ENCODE measurements at regions of chr4 and their contacts with region 1.

Region 1: GRCh38 chr4:158729716-158730559 is 6.7 kb upstream of the PPID start:
- DNase-seq: no peak
- H3K4me3 ChIP-seq: no peak overlapping the region
- H3K27ac ChIP-seq: no peak overlapping the region
- H3K4me1 ChIP-seq: no peaks in the 10 kb centered on the region
- H3K27me3 ChIP-seq: peaks cover 0 to 42% (median 0%) of the 10 kb centered on the region in 7 donors
- CTCF ChIP-seq: peak in 10 of 11 experiments; percentile 24 to 80 (median 56)
- POLR2A ChIP-seq: no peak

Region 2: GRCh38 chr4:158006990-158007389 is 722.9 kb before region 1 on chr4:
- intact Hi-C with region 1: no loop called
- DNase-seq: no peak
- H3K4me3 ChIP-seq: no peak overlapping the region
- H3K27ac ChIP-seq: peak overlapping the region in 6 of 8 donors; percentile 53 to 73 (median 66)
- H3K4me1 ChIP-seq: peaks cover 0 to 28% (median 5%) of the 10 kb centered on the region in 6 donors
- H3K27me3 ChIP-seq: no peaks in the 10 kb centered on the region
- CTCF ChIP-seq: no peak
- POLR2A ChIP-seq: no peak

Region 3: DNA sequence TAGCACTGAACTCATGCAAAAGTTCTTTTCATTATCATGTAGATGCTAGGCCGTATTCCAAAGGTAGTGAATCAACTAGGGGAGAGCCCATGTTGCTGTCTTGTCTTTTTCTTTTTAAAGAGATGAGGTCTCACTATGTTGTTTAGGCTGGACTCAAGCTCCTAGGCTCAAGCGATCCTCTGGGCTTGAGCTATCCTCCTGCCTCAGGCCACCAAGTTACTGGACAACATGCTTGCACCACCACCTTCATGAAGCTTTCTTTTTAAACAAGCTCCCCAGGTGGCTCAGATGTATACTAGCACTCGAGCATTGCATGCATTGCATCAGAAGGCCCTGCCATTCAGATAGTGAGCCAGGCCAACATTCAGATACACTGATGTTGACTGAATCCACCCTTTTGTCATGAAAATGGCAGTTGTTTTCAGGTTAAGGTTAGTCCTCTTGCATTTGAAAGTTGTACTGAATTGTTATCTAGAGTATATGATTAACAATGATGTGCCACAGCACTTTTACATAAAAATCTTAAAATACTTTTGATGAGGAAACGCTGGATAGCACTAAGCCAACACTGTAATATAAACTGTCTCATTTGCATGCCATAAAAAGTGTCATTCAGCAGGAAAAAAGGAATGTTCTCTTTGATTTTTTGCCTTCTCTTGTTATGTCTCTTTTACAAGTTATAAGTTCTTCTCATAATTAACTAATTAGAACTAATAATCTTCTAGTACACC is 115.5 kb after region 1 on chr4:
- intact Hi-C with region 1: loop called (anchors 5 kb)
- DNase-seq: no peak
- H3K4me3 ChIP-seq: no peak overlapping the region
- H3K27ac ChIP-seq: no peak overlapping the region
- H3K4me1 ChIP-seq: peaks cover 0 to 3% (median 0%) of the 10 kb centered on the region in 6 donors
- H3K27me3 ChIP-seq: no peaks in the 10 kb centered on the region
- CTCF ChIP-seq: no peak
- POLR2A ChIP-seq: no peak

Region 4: DNA sequence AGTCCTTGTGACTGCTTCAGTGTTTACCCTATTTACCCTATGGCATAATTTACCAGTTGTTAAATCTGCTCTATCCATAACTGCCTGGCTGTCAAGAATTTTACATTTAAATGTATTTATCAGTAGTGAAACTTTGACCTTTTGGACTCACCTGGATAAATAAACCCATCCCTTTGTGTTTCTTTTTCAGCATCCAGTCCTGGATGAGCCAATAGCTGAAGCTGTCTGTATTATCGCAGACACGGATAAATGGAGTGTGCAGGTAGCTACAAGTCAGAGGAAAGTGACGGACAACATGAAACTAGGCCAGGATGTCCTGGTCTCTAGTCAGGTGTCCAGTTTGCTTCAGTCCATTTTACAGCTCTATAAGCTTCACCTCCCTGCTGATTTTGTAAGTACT is 161.3 kb after region 1 on chr4:
- intact Hi-C with region 1: no loop called
- DNase-seq: no peak
- H3K4me3 ChIP-seq: no peak overlapping the region
- H3K27ac ChIP-seq: no peak overlapping the region
- H3K4me1 ChIP-seq: peaks cover 0 to 9% (median 2%) of the 10 kb centered on the region in 6 donors
- H3K27me3 ChIP-seq: no peaks in the 10 kb centered on the region
- CTCF ChIP-seq: no peak
- POLR2A ChIP-seq: no peak